CD4-positive, alpha-beta T cell (primary cell): ENCODE measurements at regions of chr13 and their contacts with region 1.

Region 1: GRCh38 chr13:45055198-45055901 is 65.0 kb upstream of the GTF2F2 start:
- DNase-seq: no peak
- ATAC-seq: no peak
- H3K4me3 ChIP-seq: no peak overlapping the region
- H3K4me3 Mint-ChIP-seq: no peak overlapping the region
- H3K27ac ChIP-seq: no peak overlapping the region
- H3K27ac Mint-ChIP-seq: no peak overlapping the region
- H3K4me1 ChIP-seq: no peaks in the 10 kb centered on the region
- H3K4me1 Mint-ChIP-seq: no peaks in the 10 kb centered on the region
- H3K27me3 ChIP-seq: no peaks in the 10 kb centered on the region
- H3K27me3 Mint-ChIP-seq: peaks cover 8% of the 10 kb centered on the region
- CTCF ChIP-seq: no peak

Region 2: DNA sequence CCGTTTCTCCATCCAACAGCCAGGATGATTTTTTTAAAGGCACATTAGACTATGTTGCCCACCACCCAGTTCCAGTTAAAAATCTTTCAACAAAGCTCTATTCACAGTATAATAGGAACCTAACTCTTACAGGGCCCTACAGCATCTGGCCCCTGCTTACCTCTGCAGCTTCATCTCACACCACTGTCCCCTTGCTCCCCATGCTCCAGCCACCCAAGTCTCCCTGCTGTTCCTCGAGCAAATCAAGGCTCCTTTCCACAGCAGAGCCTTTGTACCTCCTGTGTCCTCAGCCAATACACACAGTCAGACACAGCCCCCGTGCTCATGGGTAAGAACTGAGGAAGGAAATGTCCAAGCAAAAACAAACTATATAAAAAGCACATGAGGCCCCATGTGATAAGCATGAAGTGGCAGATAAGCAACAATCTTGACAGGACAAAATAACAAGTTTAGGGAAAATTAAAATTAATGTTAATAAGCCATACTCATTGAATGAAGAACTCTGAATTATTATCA is 546.7 kb before region 1 on chr13:
- CTCF ChIA-PET with region 1: no interaction called
- POLR2A ChIA-PET with region 1: no interaction called
- intact Hi-C with region 1: no loop called
- DNase-seq: no peak
- ATAC-seq: no peak
- H3K4me3 ChIP-seq: no peak overlapping the region
- H3K4me3 Mint-ChIP-seq: no peak overlapping the region
- H3K27ac ChIP-seq: no peak overlapping the region
- H3K27ac Mint-ChIP-seq: no peak overlapping the region
- H3K4me1 ChIP-seq: no peaks in the 10 kb centered on the region
- H3K4me1 Mint-ChIP-seq: no peaks in the 10 kb centered on the region
- H3K27me3 ChIP-seq: no peaks in the 10 kb centered on the region
- H3K27me3 Mint-ChIP-seq: no peaks in the 10 kb centered on the region
- CTCF ChIP-seq: no peak

Region 3: GRCh38 chr13:44680746-44681355 is 374.5 kb before region 1 on chr13:
- CTCF ChIA-PET with region 1: no interaction called
- POLR2A ChIA-PET with region 1: no interaction called
- intact Hi-C with region 1: no loop called
- DNase-seq: no peak
- ATAC-seq: no peak
- H3K4me3 ChIP-seq: no peak overlapping the region
- H3K4me3 Mint-ChIP-seq: no peak overlapping the region
- H3K27ac ChIP-seq: no peak overlapping the region
- H3K27ac Mint-ChIP-seq: no peak overlapping the region
- H3K4me1 ChIP-seq: no peaks in the 10 kb centered on the region
- H3K4me1 Mint-ChIP-seq: no peaks in the 10 kb centered on the region
- H3K27me3 ChIP-seq: no peaks in the 10 kb centered on the region
- H3K27me3 Mint-ChIP-seq: no peaks in the 10 kb centered on the region
- CTCF ChIP-seq: no peak

Region 4: DNA sequence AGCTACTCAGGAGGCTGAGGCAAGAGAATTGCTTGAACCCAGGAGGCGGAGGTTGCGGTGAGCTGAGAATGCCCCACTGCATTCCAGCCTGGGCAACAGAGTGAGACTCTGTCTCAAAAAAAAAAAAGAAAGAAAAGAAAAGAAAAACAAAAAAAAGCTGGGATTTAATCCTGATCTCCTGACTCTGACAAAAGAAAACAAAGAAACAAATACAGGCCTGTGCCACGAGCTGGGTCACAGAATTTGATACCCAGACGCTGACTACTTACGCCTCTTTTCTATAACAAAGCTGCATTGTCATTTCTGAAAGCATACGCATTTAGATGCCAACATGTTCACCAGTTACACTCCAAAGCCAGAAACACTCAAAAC is 46.8 kb after region 1 on chr13:
- CTCF ChIA-PET with region 1: no interaction called
- POLR2A ChIA-PET with region 1: no interaction called
- intact Hi-C with region 1: no loop called
- DNase-seq: no peak
- ATAC-seq: no peak
- H3K4me3 ChIP-seq: no peak overlapping the region
- H3K4me3 Mint-ChIP-seq: no peak overlapping the region
- H3K27ac ChIP-seq: no peak overlapping the region
- H3K27ac Mint-ChIP-seq: no peak overlapping the region
- H3K4me1 ChIP-seq: no peaks in the 10 kb centered on the region
- H3K4me1 Mint-ChIP-seq: no peaks in the 10 kb centered on the region
- H3K27me3 ChIP-seq: peaks cover 0 to 3% of the 10 kb centered on the region in 2 experiments
- H3K27me3 Mint-ChIP-seq: peaks cover 10% of the 10 kb centered on the region
- CTCF ChIP-seq: no peak

Region 5: GRCh38 chr13:45142440-45143345 is 87.3 kb after region 1 on chr13:
- CTCF ChIA-PET with region 1: no interaction called
- POLR2A ChIA-PET with region 1: no interaction called
- intact Hi-C with region 1: loop called in 1 of 2 experiments (anchors 10 kb)
- DNase-seq: no peak
- ATAC-seq: no peak
- H3K4me3 ChIP-seq: no peak overlapping the region
- H3K4me3 Mint-ChIP-seq: no peak overlapping the region
- H3K27ac ChIP-seq: no peak overlapping the region
- H3K27ac Mint-ChIP-seq: no peak overlapping the region
- H3K4me1 ChIP-seq: no peaks in the 10 kb centered on the region
- H3K4me1 Mint-ChIP-seq: peaks cover 34% of the 10 kb centered on the region
- H3K27me3 ChIP-seq: no peaks in the 10 kb centered on the region
- H3K27me3 Mint-ChIP-seq: no peaks in the 10 kb centered on the region
- CTCF ChIP-seq: no peak

Region 6: GRCh38 chr13:45441633-45442032 is 386.3 kb after region 1 on chr13:
- CTCF ChIA-PET with region 1: no interaction called
- POLR2A ChIA-PET with region 1: no interaction called
- intact Hi-C with region 1: no loop called
- DNase-seq: peak in 4 of 14 experiments; percentile 14 to 40 (median 18)
- ATAC-seq: peak; percentile 63
- H3K4me3 ChIP-seq: no peak overlapping the region
- H3K4me3 Mint-ChIP-seq: no peak overlapping the region
- H3K27ac ChIP-seq: no peak overlapping the region
- H3K27ac Mint-ChIP-seq: no peak overlapping the region
- H3K4me1 ChIP-seq: peaks cover 5% of the 10 kb centered on the region
- H3K4me1 Mint-ChIP-seq: peaks cover 9% of the 10 kb centered on the region
- H3K27me3 ChIP-seq: no peaks in the 10 kb centered on the region
- H3K27me3 Mint-ChIP-seq: no peaks in the 10 kb centered on the region
- CTCF ChIP-seq: no peak